Aorta (tissue), 5 donors: ENCODE measurements at regions of chr18 and their contacts with region 1.

Region 1: GRCh38 chr18:32439802-32440201 is 30.9 kb downstream of the GAREM1 start:
- DNase-seq: no peak
- ATAC-seq: no peak
- H3K4me3 ChIP-seq: no peak overlapping the region
- H3K27ac ChIP-seq: no peak overlapping the region
- H3K4me1 ChIP-seq: peaks cover 8 to 9% of the 10 kb centered on the region in 2 donors
- H3K27me3 ChIP-seq: no peaks in the 10 kb centered on the region

Region 2: DNA sequence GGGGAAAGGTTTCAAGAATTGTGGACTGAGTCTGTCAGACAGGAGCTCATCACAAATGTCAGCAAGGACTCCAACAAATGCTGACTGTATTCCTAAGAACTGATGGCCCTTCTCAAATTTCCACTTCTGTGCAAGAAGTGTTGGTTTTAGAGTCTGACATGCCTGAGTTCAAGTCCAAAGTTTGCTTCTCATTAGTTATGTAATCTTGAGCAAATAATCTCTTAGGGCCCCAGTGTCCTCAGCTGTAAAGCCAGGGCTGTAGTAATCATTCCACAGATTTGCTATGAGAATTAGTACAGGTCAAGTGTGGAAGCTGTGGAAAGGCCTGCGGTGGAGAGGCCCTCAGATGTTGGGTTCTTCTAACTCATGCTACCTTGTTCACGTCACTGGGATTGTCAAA is 226.1 kb before region 1 on chr18:
- intact Hi-C with region 1: no loop called
- DNase-seq: no peak
- ATAC-seq: no peak
- H3K4me3 ChIP-seq: no peak overlapping the region
- H3K27ac ChIP-seq: no peak overlapping the region
- H3K4me1 ChIP-seq: no peaks in the 10 kb centered on the region
- H3K27me3 ChIP-seq: no peaks in the 10 kb centered on the region

Region 3: GRCh38 chr18:32289483-32290075 is 150.2 kb before region 1 on chr18:
- intact Hi-C with region 1: loop called in 1 of 2 experiments (anchors 5 kb)
- DNase-seq: no peak
- ATAC-seq: peak; percentile 65
- H3K4me3 ChIP-seq: no peak overlapping the region
- H3K27ac ChIP-seq: no peak overlapping the region
- H3K4me1 ChIP-seq: no peaks in the 10 kb centered on the region
- H3K27me3 ChIP-seq: no peaks in the 10 kb centered on the region